Activated naive CD4-positive, alpha-beta T cell treated with anti-CD3 and anti-CD28 coated beads for 36 hours (primary cell): ENCODE measurements at regions of chr21 and their contacts with region 1.

Region 1: GRCh38 chr21:26093094-26093493 is 77.5 kb downstream of the APP start:
- DNase-seq: no peak
- H3K4me3 Mint-ChIP-seq: no peak overlapping the region
- H3K27ac Mint-ChIP-seq: no peak overlapping the region
- H3K4me1 Mint-ChIP-seq: no peaks in the 10 kb centered on the region
- H3K27me3 Mint-ChIP-seq: no peaks in the 10 kb centered on the region

Region 2: DNA sequence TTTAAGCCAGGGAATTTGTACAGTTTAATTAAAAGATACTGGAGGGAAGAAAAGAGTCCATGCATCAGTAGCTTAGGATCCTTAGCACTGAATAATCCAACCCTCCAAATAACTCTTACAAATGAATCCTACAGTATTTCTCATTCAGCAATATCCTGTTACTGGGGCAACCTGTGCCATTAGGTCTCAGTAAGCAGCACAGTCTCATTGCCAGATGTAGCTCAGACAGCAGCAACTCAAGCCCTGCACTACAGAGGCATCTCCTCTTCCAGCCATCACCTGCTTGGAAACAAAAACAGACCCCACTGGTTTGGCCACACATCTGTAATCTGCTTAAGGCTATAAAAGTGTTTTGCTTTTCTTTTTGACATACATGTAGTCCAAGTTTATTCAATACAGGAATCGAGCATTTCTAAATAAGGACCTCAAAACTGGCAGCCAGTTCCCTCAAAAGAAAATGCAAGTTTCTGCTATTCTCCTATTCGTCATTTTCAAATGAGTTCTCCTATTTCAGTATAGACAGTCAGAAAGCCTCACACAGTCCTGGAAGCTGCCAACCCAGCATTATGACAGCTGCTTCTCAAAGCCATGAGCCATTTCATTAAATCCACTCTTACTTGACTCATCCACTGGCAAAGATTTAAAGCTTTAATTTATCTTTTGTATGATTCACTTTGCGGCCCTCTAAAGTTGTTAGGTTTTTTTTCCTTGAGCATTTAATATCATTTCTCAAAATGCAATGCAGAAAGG is 51.5 kb before region 1 on chr21:
- CTCF ChIA-PET with region 1: no interaction called
- intact Hi-C with region 1: loop called (anchors 2 kb)
- DNase-seq: no peak
- H3K4me3 Mint-ChIP-seq: no peak overlapping the region
- H3K27ac Mint-ChIP-seq: no peak overlapping the region
- H3K4me1 Mint-ChIP-seq: peaks cover 4% of the 10 kb centered on the region
- H3K27me3 Mint-ChIP-seq: no peaks in the 10 kb centered on the region